ENCODE measurements at regions of chr11 and their contacts with region 1.

Region 1: DNA sequence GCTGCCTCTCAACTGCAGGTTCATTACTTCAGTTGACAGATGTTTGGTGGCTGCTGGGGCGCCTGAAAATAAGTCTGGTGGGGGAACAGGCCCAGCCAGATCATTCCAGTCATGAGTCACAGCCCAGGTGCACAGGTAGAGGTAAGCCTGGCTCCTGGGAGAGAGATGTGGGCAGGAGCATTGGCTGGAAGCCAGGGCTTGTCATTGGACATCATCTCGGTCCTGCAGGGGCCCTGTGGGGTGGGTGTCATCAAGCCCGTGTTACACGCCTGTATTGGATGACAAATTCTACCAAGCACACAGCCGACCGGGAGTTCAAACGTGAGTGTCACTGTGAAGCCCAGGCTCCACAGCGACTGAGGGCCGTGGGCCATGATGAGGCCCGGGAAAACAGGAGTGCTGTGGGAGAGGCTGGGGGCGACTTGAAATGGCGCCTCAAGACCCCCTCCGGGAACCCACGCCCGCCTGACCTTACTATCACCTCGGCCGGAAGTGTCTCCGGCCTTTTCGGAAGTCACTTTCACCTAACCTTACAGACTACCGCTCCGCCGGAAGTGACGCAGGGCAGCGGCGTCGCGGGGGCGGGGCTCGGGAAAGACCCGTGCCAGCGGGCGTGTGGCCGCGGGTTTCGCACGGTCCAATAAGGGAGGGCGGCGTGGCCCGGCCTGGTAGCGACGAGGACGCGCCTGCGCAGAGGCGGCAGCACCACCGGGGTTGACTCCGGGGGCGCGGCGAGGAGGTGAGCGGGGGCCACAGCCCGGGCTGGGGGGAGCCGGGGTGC is at the start of gene FKBP2:
- DNase-seq: peak; percentile 93
- CTCF ChIP-seq: no peak

Region 2: GRCh38 chr11:63916837-63917691 is 323.5 kb before region 1 on chr11 and contains the start of gene RCOR2:
- CTCF ChIA-PET with region 1: no interaction called
- POLR2A ChIA-PET with region 1: no interaction called
- DNase-seq: peak; percentile 85
- CTCF ChIP-seq: no peak

Region 3: DNA sequence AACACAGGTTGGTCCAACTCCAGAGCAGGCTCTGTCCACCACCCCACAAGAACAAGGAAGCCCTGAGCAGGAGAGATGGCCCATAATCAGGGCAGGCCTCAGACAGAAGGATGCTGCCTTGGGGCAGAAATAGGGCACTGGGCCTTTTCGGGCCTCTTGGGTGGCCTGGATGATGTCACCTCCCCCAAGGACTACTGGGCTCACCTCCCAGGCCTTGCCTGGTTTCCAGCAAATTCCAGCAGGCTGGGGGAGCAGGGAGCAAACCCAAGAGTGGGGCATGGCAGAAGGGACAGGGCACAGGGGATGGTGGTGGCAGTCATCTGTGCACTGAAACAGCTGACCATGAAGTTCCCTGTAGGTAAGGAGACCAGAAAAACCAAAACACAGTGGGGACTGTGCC is 307.1 kb before region 1 on chr11:
- CTCF ChIA-PET with region 1: no interaction called
- POLR2A ChIA-PET with region 1: no interaction called
- DNase-seq: no peak
- CTCF ChIP-seq: no peak

Region 4: DNA sequence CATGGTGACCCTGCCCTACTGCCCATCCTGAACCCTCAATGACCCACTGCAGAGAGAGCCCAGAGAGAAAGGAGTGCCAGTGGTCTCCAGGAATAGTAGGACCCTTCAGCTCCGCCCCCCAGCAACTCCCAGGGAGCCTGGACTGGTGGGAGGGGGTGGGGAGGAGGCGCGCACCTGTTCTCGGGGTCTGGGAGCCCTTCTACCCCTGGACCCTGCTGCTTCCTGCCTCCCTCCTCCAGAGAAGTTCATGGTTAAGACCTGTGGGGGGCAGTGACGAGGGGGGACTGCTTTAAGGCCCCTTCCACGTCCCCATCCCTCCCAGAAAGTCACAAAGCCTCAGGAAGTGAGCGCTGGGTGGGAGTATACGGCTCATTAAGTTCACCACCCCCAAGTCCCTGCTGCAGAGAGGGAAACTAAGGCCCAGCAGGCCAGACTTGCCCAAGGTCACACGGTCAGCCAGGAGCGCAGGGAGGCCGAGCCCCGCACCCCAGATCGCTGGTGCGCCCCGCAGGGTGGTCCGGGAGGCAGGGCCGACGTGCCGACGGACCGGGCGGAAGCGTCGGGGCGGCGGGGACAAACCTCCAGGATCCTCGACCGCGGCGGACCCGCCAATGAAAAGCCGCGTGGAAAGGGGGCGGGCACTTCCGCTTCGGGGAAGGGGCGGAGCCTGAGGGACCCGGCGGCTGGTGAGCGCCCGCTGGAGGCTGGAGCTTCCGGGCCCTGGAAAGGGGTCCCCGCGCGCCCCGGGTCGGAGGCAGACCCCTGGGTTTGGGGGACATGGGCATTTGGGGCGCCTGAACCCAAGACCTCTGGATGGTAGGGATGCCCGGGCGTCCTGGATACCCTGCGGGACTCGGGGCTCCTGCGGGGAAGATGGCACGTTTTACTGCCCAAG is 14.7 kb before region 1 on chr11 and contains the starts of genes NUDT22 and TRPT1:
- CTCF ChIA-PET with region 1: interaction called, 16 read pairs
- POLR2A ChIA-PET with region 1: interaction called, 13 read pairs
- DNase-seq: peak; percentile 93
- CTCF ChIP-seq: peak; percentile 22

Measured in GM10248 (cell line).